Activated T-helper 1 cell treated with anti-CD3 and anti-CD28 coated beads, Interleukin-12 subunit alpha, Interleukin-12 subunit beta, Interleukin-2, Interleukin-4 antibody, amounts not matched to agents 30 ng/mL and 10 ng/mL and 1 ng/mL, durations not matched to agents 14 hours and 24 hours and 36 hours (primary cell): ENCODE measurements at regions of chr12 and their contacts with region 1.

Region 1: GRCh38 chr12:122860346-122861090 is 25.3 kb downstream of the HIP1R start:
- DNase-seq: peak; percentile 67
- H3K4me3 Mint-ChIP-seq: no peak overlapping the region
- H3K27ac Mint-ChIP-seq: no peak overlapping the region
- H3K4me1 Mint-ChIP-seq: no peaks in the 10 kb centered on the region
- H3K27me3 Mint-ChIP-seq: no peaks in the 10 kb centered on the region

Region 2: DNA sequence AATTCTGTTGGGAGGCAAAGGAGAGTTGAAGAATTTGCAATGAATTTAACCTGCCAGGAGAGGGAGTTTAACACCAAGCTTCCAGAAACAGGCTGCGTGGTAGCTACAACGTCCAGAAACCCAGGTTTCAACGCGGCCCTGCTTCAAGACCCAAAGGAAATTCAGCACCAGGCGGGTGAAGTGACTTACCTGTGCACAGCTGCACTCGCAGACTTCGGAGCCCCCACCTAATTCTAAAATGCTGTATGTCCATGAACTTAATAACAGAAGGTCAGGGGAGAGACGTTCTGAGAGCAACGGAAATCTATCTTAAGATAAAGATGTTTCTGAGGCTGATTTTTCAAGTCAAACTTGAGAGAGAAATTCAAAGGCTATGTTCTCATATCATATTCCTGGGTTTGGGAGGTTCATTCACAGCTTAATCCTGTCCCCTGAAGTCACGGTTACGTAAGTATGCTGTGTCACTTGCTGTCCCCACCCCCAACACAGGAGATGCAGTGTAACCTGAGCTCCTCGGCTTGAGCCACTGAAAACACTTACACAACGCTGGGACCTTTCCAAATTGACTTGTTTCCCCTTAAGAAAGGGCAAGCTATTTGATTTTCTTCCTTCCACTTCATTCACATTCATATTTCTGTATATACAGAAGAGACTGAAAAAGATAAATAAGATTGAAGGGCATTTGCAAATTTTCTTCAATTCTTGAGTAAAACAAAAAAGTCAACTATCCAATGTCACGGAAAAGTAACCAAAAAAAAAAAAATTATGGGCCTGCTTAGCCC is 460.7 kb before region 1 on chr12:
- intact Hi-C with region 1: no loop called
- DNase-seq: peak; percentile 38
- H3K4me3 Mint-ChIP-seq: peak overlapping the region; percentile 65
- H3K27ac Mint-ChIP-seq: peak overlapping the region; percentile 66
- H3K4me1 Mint-ChIP-seq: peaks cover 30% of the 10 kb centered on the region
- H3K27me3 Mint-ChIP-seq: no peaks in the 10 kb centered on the region

Region 3: DNA sequence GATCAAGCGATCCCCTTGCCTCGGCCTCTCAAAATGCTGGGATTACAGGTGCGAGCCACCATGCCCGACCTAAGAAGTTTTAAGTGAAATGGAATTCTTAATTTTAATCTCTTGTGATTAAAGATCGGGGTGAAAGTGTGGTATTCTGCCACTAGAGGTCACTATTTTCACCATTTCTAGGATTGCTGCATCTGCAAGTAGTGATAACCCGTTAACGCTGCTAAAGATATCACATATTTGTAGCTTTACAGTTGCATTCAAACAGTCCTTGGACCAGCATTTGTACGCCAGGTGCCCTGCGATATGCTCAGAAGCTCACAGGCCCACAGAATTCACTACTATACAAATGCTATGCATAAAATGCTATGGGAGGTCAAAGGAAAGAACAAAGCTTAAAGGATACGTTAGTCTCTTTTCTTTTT is 66.8 kb before region 1 on chr12:
- intact Hi-C with region 1: loop called (anchors 5 kb)
- DNase-seq: no peak
- H3K4me3 Mint-ChIP-seq: no peak overlapping the region
- H3K27ac Mint-ChIP-seq: no peak overlapping the region
- H3K4me1 Mint-ChIP-seq: peaks cover 4% of the 10 kb centered on the region
- H3K27me3 Mint-ChIP-seq: no peaks in the 10 kb centered on the region

Region 4: DNA sequence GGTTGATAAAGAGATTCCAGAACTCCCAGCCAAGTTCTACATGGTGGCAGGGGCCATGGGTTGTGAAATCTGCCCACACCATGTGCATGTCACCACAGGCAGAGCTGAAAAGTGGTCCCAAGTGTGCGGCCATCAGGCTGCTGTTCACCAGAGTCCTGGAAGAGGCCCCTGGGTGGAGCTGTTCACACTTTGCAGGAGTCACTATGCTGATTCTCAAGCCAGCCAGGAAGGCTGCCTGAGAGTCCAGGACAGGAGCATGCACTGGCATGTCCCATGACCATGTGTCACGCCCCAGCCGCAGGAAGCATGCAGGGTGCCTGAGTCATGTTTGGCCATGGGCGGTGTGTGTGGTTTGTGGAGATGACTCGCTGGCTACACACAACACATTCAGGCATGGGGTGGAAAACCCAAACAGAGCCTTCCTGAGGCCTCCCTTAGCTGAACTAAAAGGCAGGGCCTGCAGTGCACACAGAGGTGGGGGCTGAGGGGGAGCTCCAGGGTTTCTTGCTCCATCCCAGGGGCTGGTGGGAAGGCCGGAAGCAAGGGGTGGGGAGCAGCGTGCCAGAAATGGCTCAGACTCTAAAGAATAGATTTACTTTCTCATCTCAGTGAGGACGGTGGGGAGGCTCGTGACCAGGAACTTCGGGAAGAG is 86.3 kb after region 1 on chr12:
- intact Hi-C with region 1: loop called (anchors 1 kb)
- DNase-seq: peak; percentile 80
- H3K4me3 Mint-ChIP-seq: peak overlapping the region; percentile 49
- H3K27ac Mint-ChIP-seq: peak overlapping the region; percentile 73
- H3K4me1 Mint-ChIP-seq: peaks cover 43% of the 10 kb centered on the region
- H3K27me3 Mint-ChIP-seq: peaks cover 1% of the 10 kb centered on the region

Region 5: GRCh38 chr12:122951979-122952892 is 91.7 kb after region 1 on chr12:
- intact Hi-C with region 1: loop called (anchors 1 kb)
- DNase-seq: peak; percentile 63
- H3K4me3 Mint-ChIP-seq: no peak overlapping the region
- H3K27ac Mint-ChIP-seq: no peak overlapping the region
- H3K4me1 Mint-ChIP-seq: peaks cover 16% of the 10 kb centered on the region
- H3K27me3 Mint-ChIP-seq: peaks cover 1% of the 10 kb centered on the region

Region 6: DNA sequence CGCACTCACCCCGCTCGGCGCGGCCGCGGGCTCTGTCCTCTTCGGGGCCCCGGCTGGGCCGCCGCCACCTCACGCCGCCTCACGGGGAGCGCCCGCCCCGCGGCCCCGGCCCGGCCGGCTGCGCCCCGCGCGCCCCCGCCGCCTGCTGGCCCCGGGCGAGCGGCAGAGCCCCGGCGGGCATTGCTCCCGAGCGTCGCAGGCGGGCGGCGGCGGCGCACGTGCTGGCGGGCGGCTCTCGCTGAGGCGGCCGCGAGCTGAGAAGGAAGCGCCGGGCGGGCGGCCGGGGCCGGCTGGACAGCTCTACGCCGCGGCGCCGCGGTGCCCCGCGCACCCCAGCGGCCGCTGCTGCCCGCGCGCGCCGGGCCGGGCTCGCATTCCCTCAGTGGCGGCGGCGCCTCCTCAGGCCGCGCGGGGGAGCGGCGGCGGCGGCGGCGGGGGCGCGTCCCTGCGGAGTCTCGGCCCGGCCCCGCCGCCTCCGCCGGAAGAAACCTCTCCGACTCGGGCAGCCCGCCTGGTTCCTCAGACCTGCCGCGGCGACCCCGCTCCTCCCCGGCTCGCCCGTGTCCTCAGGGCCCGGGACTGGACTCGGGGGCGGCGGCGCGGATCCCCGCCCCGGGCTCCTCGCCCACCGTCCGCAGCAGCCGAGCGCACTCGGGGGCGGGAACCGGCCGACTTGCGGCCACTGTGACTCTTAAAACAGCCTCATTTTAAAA is 290.4 kb after region 1 on chr12 and contains the start of gene PITPNM2:
- intact Hi-C with region 1: loop called (anchors 10 kb)
- DNase-seq: peak; percentile 56
- H3K4me3 Mint-ChIP-seq: peak within 1 kb of the TSS; percentile 89
- H3K27ac Mint-ChIP-seq: peak within 1 kb of the TSS; percentile 90
- H3K4me1 Mint-ChIP-seq: peaks cover 41% of the 10 kb centered on the region
- H3K27me3 Mint-ChIP-seq: peaks cover 16% of the 10 kb centered on the region
- total RNA-seq, gene PITPNM2: 22.3 and 25.5 TPM in 2 replicates